Naive thymus-derived CD4-positive, alpha-beta T cell (primary cell): ENCODE measurements at regions of chr3 and their contacts with region 1.

Region 1: GRCh38 chr3:56682462-56683121 is 473 bp downstream of the TASOR start:
- DNase-seq: peak; percentile 70 to 84 (median 79)
- ATAC-seq: peak; percentile 81
- H3K4me3 ChIP-seq: peak overlapping the region; percentile 93
- H3K4me3 Mint-ChIP-seq: peak overlapping the region; percentile 88 to 100 (median 94)
- H3K27ac ChIP-seq: peak overlapping the region; percentile 92
- H3K27ac Mint-ChIP-seq: peak overlapping the region; percentile 90 to 100 (median 94)
- H3K4me1 ChIP-seq: peaks cover 33 to 34% of the 10 kb centered on the region in 2 donors
- H3K4me1 Mint-ChIP-seq: peaks cover 28 to 55% (median 48%) of the 10 kb centered on the region in 7 donors
- H3K27me3 ChIP-seq: no peaks in the 10 kb centered on the region
- H3K27me3 Mint-ChIP-seq: no peaks in the 10 kb centered on the region

Region 2: DNA sequence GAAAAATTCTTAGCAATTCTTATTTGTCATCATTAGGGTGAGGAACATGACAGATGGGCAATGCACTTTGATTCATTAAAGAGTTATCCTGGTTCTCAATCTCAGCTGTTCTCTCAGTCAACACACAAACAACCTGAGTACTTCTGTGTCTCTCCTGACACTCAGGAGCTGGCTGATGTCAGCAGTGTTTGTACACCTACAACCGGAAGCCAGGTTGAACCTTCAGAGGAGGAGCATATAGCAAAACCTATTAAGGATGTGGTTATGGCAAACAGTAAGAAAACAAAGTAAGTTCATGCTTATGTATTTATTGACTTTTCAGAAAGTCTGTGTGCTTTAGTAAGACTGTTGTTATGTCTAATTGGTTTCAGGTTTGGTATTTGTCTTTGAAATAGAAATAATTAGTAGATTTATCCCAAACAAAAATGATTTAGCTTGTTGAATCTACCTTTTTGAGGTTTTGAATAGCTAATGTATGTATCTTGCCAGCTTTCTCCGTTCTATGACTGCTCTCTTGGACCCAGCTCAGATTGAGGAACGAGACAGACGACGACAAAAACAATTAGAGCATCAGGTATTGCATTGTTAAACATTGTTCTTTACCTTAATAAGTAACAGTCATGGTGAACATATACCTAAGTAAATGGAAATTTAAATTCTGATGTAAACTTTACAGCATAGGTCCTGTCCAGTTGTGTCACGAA is 89.0 kb before region 1 on chr3:
- CTCF ChIA-PET with region 1: no interaction called
- POLR2A ChIA-PET with region 1: interaction called, 21 read pairs
- intact Hi-C with region 1: loop called in 1 of 2 experiments (anchors 1 kb)
- DNase-seq: peak in 7 of 9 donors; percentile 67 to 86 (median 79)
- ATAC-seq: peak; percentile 99
- H3K4me3 ChIP-seq: peak overlapping the region; percentile 17
- H3K4me3 Mint-ChIP-seq: peak overlapping the region; percentile 45 to 85 (median 76)
- H3K27ac ChIP-seq: peak overlapping the region; percentile 63
- H3K27ac Mint-ChIP-seq: peak overlapping the region; percentile 87 to 98 (median 95)
- H3K4me1 ChIP-seq: peaks cover 23 to 56% of the 10 kb centered on the region in 2 donors
- H3K4me1 Mint-ChIP-seq: peaks cover 26 to 87% (median 75%) of the 10 kb centered on the region in 7 donors
- H3K27me3 ChIP-seq: no peaks in the 10 kb centered on the region
- H3K27me3 Mint-ChIP-seq: no peaks in the 10 kb centered on the region

Region 3: DNA sequence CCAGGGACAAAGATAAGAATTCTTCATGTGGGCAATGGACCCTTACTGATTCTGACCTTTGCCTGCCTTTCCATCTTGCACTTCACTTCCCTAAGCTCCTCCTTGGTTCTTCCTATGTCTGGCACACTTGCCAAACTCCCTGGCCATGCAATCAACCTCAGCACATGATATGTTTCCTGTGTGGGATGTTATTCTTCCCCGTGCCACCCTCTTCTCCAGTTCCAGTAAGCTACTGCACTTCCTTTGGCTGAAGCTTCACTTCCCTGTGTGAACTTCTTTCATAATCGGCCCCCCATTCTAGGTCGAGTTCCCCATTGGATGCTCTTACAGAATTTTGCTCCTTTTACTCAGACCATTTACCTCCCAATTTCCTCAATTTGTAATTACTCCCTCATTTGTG is 11.2 kb after region 1 on chr3:
- CTCF ChIA-PET with region 1: interaction called, 4 read pairs
- POLR2A ChIA-PET with region 1: interaction called, 54 read pairs
- intact Hi-C with region 1: loop called (anchors 1 kb)
- DNase-seq: no peak
- ATAC-seq: peak; percentile 60
- H3K4me3 ChIP-seq: no peak overlapping the region
- H3K4me3 Mint-ChIP-seq: peak overlapping the region; percentile 57 to 90 (median 80)
- H3K27ac ChIP-seq: peak overlapping the region; percentile 26
- H3K27ac Mint-ChIP-seq: peak overlapping the region; percentile 37 to 84 (median 68)
- H3K4me1 ChIP-seq: peaks cover 32 to 36% of the 10 kb centered on the region in 2 donors
- H3K4me1 Mint-ChIP-seq: peaks cover 33 to 49% (median 44%) of the 10 kb centered on the region in 7 donors
- H3K27me3 ChIP-seq: no peaks in the 10 kb centered on the region
- H3K27me3 Mint-ChIP-seq: no peaks in the 10 kb centered on the region

Region 4: DNA sequence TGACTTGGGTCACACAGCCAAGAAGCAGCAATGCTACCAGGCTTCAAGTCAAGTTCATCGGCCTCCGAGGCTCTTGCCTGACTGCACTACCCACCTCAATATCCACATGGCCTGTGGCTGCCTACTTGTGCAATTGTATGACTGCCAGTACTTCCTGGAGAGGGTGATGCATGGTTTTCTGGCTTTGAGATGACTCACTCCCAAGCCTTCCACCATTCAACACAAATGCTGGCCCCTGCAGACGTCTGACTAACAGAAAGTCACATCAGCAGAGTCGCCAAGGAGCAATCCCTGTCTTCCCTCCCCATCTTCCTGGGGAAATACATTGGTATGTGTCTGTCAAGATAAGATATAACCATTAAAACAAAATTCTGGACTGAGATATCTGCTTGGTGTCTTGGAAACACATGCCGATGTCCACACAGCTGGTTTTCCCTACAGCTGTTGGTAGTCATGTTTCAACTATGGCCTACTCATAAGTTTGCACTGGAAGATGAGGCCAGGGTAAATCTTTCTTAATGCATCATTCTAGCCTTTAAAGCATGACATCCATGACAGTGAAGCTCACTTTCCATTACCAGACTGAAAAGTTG is 298.3 kb after region 1 on chr3:
- CTCF ChIA-PET with region 1: no interaction called
- POLR2A ChIA-PET with region 1: no interaction called
- intact Hi-C with region 1: no loop called
- DNase-seq: peak in 1 of 9 donors; percentile 49
- ATAC-seq: peak; percentile 93
- H3K4me3 ChIP-seq: no peak overlapping the region
- H3K4me3 Mint-ChIP-seq: no peak overlapping the region
- H3K27ac ChIP-seq: no peak overlapping the region
- H3K27ac Mint-ChIP-seq: peak overlapping the region in 1 of 9 donors; percentile 36
- H3K4me1 ChIP-seq: no peaks in the 10 kb centered on the region
- H3K4me1 Mint-ChIP-seq: peaks cover 2 to 24% (median 5%) of the 10 kb centered on the region in 7 donors
- H3K27me3 ChIP-seq: no peaks in the 10 kb centered on the region
- H3K27me3 Mint-ChIP-seq: no peaks in the 10 kb centered on the region

Region 5: DNA sequence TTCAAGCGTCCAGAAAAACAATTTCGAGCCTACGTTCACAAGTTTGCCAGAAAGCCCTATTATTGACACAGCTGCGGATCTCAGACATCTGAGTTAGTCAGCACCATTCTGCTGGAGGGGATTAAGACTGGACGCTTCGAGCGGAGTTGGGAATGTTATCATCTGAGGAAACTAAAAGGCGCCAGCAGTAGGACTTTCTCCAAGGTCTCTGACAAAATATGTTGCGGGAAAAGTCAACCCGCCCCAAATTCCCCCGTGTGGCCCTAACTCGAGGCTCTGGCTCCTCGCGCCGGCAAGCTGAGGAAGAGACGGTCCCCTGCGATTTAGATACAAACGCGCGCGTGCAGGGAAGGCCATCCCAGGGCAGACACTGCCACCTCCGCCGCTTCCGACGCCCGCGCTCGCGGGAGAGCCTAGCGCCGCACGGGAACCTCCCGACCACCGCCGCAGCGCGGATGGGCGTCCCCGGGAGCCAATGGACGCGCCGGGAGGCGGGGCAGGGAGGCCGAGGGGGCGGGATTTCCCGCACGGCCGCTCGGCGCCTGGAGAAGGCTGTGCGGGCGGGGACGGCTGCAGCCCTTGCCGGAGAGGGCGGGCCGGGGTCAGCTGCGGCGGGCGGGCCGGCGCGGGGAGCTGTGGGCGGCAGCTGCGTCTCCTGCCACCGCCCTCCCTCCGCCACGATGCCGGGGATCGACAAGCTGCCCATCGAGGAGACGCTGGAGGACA is 544.8 kb after region 1 on chr3 and contains the start of gene APPL1:
- CTCF ChIA-PET with region 1: no interaction called
- POLR2A ChIA-PET with region 1: no interaction called
- intact Hi-C with region 1: loop called (anchors 5 kb)
- DNase-seq: peak; percentile 76 to 97 (median 82)
- ATAC-seq: peak; percentile 96
- H3K4me3 ChIP-seq: peak within 1 kb of the TSS; percentile 88
- H3K4me3 Mint-ChIP-seq: peak within 1 kb of the TSS; percentile 89 to 95 (median 93)
- H3K27ac ChIP-seq: peak within 1 kb of the TSS; percentile 71
- H3K27ac Mint-ChIP-seq: peak within 1 kb of the TSS; percentile 72 to 90 (median 86)
- H3K4me1 ChIP-seq: peaks cover 9 to 12% of the 10 kb centered on the region in 2 donors
- H3K4me1 Mint-ChIP-seq: peaks cover 17 to 38% (median 29%) of the 10 kb centered on the region in 7 donors
- H3K27me3 ChIP-seq: no peaks in the 10 kb centered on the region
- H3K27me3 Mint-ChIP-seq: peaks cover 0 to 5% (median 0%) of the 10 kb centered on the region in 5 donors
- total RNA-seq, gene APPL1: 25.4 to 42.1 (median 29.2) TPM

Region 6: GRCh38 chr3:57755668-57756527 is 1073.3 kb after region 1 on chr3 and contains the start of gene SLMAP:
- CTCF ChIA-PET with region 1: no interaction called
- POLR2A ChIA-PET with region 1: interaction called, 4 read pairs
- intact Hi-C with region 1: loop called in 1 of 2 experiments (anchors 5 kb)
- DNase-seq: peak; percentile 84 to 97 (median 95)
- ATAC-seq: peak; percentile 98
- H3K4me3 ChIP-seq: peak within 1 kb of the TSS; percentile 80
- H3K4me3 Mint-ChIP-seq: peak within 1 kb of the TSS; percentile 92 to 98 (median 97)
- H3K27ac ChIP-seq: peak within 1 kb of the TSS; percentile 84
- H3K27ac Mint-ChIP-seq: peak within 1 kb of the TSS; percentile 88 to 96 (median 92)
- H3K4me1 ChIP-seq: peaks cover 23 to 29% of the 10 kb centered on the region in 2 donors
- H3K4me1 Mint-ChIP-seq: peaks cover 17 to 45% (median 41%) of the 10 kb centered on the region in 7 donors
- H3K27me3 ChIP-seq: no peaks in the 10 kb centered on the region
- H3K27me3 Mint-ChIP-seq: peaks cover 0 to 8% (median 0%) of the 10 kb centered on the region in 5 donors
- total RNA-seq, gene SLMAP: 54.6 to 77.1 (median 66.6) TPM